PC-3 (cell line): ENCODE measurements at regions of chr1 and their contacts with region 1.

Region 1: GRCh38 chr1:63615768-63616420 is 22.7 kb downstream of the PGM1 start:
- DNase-seq: peak; percentile 94
- ATAC-seq: peak; percentile 76
- H3K4me3 ChIP-seq: no peak overlapping the region
- H3K27ac ChIP-seq: no peak overlapping the region
- H3K4me1 ChIP-seq: peaks cover 7% of the 10 kb centered on the region; the same call in 1 of the 2 replicates
- H3K27me3 ChIP-seq: no peaks in the 10 kb centered on the region
- CTCF ChIP-seq: peak; percentile 88

Region 2: DNA sequence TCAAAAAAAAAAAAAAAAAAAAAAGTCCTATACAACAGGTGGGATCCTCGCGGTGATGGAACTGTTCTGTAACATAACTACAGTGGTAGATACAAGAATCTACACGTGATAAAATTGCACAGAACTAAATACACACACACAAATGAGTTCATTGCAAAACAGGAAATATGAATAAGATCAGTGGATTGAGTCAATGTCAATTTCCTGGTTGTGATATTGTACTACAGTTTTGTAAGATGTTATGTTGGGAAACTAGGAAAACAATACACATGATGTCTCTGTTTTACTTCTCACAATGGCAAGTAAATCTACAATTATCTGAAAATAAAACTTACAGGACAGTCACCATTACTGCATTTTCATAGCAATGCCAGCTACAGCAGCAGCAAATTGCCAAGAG is 152.6 kb before region 1 on chr1:
- CTCF ChIA-PET with region 1: no interaction called
- POLR2A ChIA-PET with region 1: no interaction called
- intact Hi-C with region 1: no loop called
- DNase-seq: peak; percentile 45
- ATAC-seq: peak; percentile 59
- H3K4me3 ChIP-seq: no peak overlapping the region
- H3K27ac ChIP-seq: peak overlapping the region; percentile 22
- H3K4me1 ChIP-seq: peaks cover 6% of the 10 kb centered on the region; the same call in 1 of the 2 replicates
- H3K27me3 ChIP-seq: no peaks in the 10 kb centered on the region
- CTCF ChIP-seq: no peak

Region 3: DNA sequence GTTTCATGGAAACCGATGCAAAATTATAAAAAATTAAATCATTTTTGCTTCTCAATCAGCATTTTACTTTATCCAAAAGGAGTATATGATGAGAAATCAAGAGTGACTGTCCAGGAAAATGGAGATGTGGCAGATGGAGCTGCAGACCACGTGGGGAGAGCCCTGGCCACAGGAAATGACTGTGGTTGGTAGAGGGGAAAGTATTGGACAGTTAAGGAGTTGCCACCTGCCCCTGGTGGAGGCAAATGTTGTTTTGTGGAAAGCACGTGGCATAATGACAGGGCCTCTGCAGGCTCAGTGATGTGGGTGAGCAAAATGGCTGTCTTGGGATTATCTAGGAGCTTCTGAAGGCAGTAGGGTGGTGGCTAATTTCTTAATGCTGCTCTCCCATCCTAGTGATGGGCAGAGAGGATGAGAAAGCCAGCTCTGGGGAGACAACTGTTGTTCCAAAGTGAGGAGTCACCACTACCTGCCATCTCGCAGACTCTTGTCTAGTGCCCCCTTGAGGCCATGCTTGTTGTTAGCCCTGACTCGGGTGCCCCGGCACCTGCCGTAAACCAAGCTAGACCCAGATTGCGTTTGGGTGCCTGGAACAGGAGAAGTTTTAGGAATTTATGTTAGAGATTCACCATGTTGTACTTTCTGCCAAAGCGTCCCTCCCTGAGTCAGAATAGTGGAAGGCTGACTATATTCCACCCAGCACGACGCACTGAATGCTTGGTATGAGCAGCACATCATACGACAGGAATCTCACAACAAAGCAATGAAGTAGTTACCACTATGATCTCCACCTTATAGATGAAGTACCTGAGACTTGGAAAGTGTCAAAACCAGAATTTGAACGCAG is 301.9 kb after region 1 on chr1:
- CTCF ChIA-PET with region 1: no interaction called
- POLR2A ChIA-PET with region 1: no interaction called
- intact Hi-C with region 1: loop called (anchors 10 kb)
- DNase-seq: peak; percentile 29
- ATAC-seq: no peak
- H3K4me3 ChIP-seq: no peak overlapping the region
- H3K27ac ChIP-seq: no peak overlapping the region
- H3K4me1 ChIP-seq: peaks cover 25% of the 10 kb centered on the region
- H3K27me3 ChIP-seq: no peaks in the 10 kb centered on the region
- CTCF ChIP-seq: peak; percentile 53

Region 4: GRCh38 chr1:64163970-64164369 is 548.1 kb after region 1 on chr1:
- CTCF ChIA-PET with region 1: no interaction called
- POLR2A ChIA-PET with region 1: no interaction called
- intact Hi-C with region 1: loop called (anchors 5 kb)
- DNase-seq: peak; percentile 44
- ATAC-seq: peak; percentile 61; the same call in 1 of the 2 replicates
- H3K4me3 ChIP-seq: no peak overlapping the region
- H3K27ac ChIP-seq: no peak overlapping the region
- H3K4me1 ChIP-seq: no peaks in the 10 kb centered on the region
- H3K27me3 ChIP-seq: no peaks in the 10 kb centered on the region
- CTCF ChIP-seq: peak; percentile 74